Lower leg skin (tissue), 4 donors: ENCODE measurements at regions of chr10 and their contacts with region 1.

Region 1: DNA sequence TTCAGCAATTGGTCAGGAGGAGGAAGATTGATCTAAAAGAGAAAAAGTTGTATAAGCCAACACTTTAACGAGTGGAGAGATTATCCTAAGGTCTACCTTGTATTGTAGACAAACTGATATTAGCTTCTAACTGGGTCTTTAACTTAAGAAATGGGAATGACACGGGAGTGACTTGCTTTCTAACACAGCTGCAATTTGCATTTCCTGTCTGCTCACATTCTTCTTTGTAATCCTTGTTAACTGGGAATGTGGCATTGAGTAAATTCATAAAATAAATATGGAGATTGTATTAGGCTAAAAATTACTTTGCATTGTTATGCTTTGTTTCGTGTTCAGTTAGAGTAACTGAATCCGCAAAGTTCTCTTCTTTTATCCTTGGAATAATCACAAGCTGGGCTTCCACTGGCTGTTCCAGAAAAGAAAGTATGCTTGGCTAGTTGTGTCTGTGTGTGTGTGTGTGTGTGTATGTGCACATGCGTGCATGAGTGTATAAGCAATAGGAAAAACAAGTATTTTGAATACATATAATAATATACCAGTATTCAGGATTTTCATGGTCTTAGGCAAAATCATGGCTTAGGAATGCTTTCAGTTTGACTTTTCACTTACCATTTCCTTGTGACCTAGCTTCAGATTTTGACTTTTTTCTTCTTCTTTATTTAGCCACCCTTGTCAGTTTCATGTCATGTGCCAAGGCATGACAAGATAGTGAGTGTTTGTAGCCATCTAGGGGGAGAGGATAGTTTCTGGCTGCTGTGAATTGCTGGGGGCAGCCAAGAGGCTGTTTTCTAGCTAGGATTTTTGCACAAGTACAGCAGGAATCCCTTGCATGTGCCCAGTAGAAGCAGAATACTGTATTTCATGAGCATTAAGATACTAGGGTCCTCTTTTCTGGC is 54.5 kb upstream of the FZD8 start:
- DNase-seq: no peak
- H3K4me3 ChIP-seq: no peak overlapping the region
- CTCF ChIP-seq: no peak
- POLR2A ChIP-seq: no peak

Region 2: DNA sequence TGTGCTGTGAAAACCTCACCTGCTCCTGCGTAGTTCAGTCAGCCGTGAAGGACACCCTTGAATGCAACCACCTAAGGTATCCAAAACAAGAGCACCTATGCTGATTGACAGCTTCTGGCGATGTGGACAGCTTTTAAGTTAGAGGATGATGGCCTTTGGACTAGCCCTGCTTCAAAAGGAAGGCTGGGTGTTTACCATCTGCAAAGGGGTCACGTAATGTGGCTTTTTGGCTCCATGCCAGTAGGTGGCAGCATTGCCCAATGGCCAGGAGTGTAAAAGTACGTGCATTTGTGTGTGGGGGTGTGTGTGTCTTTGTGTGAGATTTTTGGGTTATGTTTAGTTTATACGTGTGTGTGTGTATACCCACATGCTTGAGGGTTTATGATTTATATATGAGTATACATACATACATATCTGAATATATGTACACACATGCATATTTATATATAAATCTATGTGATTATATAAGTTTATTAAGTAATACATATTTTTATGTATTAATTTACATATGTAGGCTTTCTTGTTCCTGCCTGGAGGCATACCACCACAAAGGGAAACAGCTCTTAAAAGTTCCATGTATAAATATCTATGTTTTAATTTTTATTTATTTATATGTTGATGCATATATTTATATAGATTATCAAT is 1192.4 kb after region 1 on chr10:
- intact Hi-C with region 1: no loop called
- DNase-seq: no peak
- H3K4me3 ChIP-seq: no peak overlapping the region
- CTCF ChIP-seq: peak in 1 of 3 donors; percentile 46
- POLR2A ChIP-seq: no peak

Region 3: DNA sequence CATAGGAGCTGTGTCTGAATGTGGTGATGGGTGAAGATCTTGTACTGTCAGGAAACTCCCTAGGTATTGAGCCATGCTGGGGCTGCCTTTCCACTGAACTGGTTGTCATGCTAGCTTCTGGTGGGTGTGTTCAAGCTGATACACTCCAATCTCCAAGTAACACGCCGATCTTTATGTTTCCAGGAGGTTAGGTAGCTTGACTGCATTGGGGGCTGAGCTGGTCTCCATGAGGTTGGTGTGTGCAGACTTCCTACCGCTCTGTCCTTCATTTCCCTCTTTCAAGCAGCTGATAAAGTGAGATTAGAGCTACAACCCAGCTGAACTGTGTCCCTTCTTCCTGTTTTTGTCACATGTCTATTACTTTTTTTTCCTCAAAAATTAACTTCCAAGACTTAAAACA is 1694.3 kb after region 1 on chr10:
- intact Hi-C with region 1: loop called (anchors 5 kb)
- DNase-seq: no peak
- H3K4me3 ChIP-seq: no peak overlapping the region
- CTCF ChIP-seq: no peak
- POLR2A ChIP-seq: no peak